PC-9 (cell line): ENCODE measurements at regions of chr10 and their contacts with region 1.

Region 1: GRCh38 chr10:106793617-106794016 is 370.9 kb downstream of the SORCS1 start:
- DNase-seq: no peak
- H3K4me3 ChIP-seq: no peak overlapping the region
- H3K27ac ChIP-seq: no peak overlapping the region
- H3K4me1 ChIP-seq: no peaks in the 10 kb centered on the region
- H3K27me3 ChIP-seq: 0 out of 2 replicates have a peak, but pooled peaks cover 11% of the 10 kb centered on the region
- CTCF ChIP-seq: no peak

Region 2: DNA sequence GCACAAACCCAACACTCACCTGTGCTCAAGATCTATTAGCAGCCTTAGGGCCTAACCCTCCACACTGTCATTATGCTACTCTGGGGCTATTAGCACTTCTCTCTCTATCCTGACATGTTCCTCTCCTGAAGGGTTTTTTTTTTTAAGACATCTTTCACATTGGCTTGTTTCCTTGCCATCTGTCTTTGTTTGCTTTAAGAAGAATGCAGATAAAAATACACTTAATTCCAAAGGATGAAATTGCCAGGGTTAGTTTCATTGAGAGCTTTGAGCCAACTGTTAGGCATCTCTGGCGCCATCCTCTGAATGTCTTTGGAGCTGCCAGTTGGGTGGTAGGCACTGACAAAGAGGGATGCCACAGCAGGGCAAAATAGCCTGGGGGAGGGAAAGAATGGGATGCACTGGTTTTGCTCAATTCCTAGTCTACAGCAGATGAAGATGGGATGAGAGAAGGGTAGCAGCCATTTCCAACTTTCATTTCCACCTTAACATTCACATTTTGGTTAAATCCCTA is 28.3 kb before region 1 on chr10:
- CTCF ChIA-PET with region 1: interaction called, 13 read pairs
- POLR2A ChIA-PET with region 1: no interaction called
- intact Hi-C with region 1: no loop called
- DNase-seq: no peak
- H3K4me3 ChIP-seq: no peak overlapping the region
- H3K27ac ChIP-seq: no peak overlapping the region
- H3K4me1 ChIP-seq: no peaks in the 10 kb centered on the region
- H3K27me3 ChIP-seq: 0 out of 2 replicates have a peak, but pooled peaks cover 5% of the 10 kb centered on the region
- CTCF ChIP-seq: no peak

Region 3: DNA sequence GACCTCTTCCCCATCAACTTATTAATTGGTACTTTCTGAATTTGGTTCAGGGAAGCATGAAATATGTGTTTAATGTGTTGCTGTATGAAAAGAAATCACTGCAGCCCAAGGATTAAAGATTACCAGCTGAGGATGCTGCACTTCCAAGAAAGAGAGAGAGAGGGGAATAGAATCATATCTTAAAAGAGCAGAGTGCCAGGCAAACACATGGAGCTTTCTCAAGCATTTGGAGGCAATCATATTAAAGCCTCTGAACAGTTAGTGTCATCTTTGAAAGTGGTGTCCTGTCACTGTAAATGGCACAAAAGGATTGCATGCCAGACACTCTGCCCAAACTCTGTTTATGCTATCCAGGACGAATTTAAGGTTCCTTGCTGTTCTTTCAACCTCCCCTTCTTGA is 15.8 kb before region 1 on chr10:
- CTCF ChIA-PET with region 1: no interaction called
- POLR2A ChIA-PET with region 1: no interaction called
- intact Hi-C with region 1: no loop called
- DNase-seq: no peak
- H3K4me3 ChIP-seq: no peak overlapping the region
- H3K27ac ChIP-seq: no peak overlapping the region
- H3K4me1 ChIP-seq: no peaks in the 10 kb centered on the region
- H3K27me3 ChIP-seq: no peaks in the 10 kb centered on the region
- CTCF ChIP-seq: no peak